ENCODE measurements at regions of chr4 and their contacts with region 1.

Region 1: GRCh38 chr4:145234091-145234706 is 53.8 kb upstream of the OTUD4 start:
- DNase-seq: peak; percentile 65
- ATAC-seq: peak; percentile 91
- H3K4me3 Mint-ChIP-seq: no peak overlapping the region
- H3K27ac Mint-ChIP-seq: no peak overlapping the region
- H3K4me1 Mint-ChIP-seq: no peaks in the 10 kb centered on the region
- H3K27me3 Mint-ChIP-seq: peaks cover 15% of the 10 kb centered on the region

Region 2: DNA sequence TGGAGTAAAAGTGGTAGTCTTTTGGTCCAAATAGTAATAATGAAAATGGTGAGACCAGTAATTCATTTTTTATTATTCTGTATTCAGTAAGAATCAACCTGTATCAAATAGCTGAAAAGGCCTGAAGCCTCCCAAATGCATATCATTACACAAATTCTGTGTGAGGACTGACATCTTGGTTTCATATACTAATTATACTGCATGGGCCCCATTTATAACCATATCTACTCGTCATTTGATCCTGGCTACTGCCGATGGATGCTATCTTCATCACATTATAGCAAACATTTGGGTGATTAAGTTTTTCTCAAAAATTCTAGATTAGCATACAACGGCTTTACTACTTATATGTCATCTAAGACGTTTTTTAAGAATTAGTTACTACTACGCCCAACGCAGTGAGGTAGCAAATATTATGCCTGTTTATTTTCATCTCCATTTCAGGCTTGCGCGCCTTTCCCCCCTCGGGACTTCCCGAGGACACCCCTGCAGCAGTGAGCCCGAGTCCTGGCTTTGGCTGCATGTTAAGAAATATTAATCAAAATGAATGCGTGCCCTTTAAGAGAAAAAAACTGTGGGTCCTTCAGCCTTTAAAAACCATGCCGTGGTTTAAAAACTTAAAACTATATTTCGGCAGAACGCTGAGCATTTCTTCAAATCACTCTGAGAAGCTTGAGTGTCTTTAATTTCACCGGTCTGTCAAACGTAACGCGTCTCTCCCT is 384.2 kb after region 1 on chr4:
- CTCF ChIA-PET with region 1: interaction called, 14 read pairs
- DNase-seq: no peak
- ATAC-seq: no peak
- H3K4me3 Mint-ChIP-seq: peak overlapping the region; percentile 97
- H3K27ac Mint-ChIP-seq: peak overlapping the region; percentile 99
- H3K4me1 Mint-ChIP-seq: peaks cover 38% of the 10 kb centered on the region
- H3K27me3 Mint-ChIP-seq: no peaks in the 10 kb centered on the region